Ovary (tissue), 10 donors: ENCODE measurements at regions of chr5 and their contacts with region 1.

Region 1: DNA sequence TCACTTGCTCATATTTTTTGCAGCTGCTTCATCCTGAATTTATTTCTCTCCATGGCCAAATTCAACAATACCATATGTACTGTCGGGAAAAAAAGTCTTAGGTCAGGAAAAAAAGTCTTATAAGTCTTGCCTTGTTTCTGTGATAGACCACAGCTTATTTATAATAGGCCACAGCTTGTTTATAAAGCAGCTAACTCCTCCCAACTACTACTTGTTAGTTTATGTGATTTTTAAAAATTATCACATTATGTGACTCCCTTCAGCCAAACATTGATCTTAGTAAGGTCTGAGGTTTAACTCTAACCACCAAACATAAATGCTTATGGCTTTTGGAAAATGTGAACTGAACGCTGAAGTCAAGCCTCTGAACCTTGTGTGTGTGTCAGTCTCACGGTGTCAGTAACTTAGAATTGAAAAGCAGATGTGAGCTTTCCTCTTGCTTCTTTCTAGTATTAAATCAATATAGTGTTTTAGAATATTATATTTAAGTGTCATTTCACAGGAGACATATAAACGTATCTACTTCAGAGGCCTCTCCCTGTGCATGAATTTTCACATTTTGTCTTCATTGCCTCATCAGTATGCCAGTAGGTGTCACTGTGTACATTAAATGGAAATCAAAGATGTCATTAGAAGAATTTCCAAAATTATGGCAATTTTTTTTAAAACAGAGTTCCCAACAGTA is 51.3 kb downstream of the SNX24 start:
- DNase-seq: no peak
- H3K4me3 ChIP-seq: no peak overlapping the region
- H3K27ac ChIP-seq: no peak overlapping the region
- H3K4me1 ChIP-seq: no peaks in the 10 kb centered on the region
- H3K27me3 ChIP-seq: no peaks in the 10 kb centered on the region
- CTCF ChIP-seq: peak in 1 of 3 donors; percentile 18
- EP300 ChIP-seq: no peak
- POLR2A ChIP-seq: no peak

Region 2: DNA sequence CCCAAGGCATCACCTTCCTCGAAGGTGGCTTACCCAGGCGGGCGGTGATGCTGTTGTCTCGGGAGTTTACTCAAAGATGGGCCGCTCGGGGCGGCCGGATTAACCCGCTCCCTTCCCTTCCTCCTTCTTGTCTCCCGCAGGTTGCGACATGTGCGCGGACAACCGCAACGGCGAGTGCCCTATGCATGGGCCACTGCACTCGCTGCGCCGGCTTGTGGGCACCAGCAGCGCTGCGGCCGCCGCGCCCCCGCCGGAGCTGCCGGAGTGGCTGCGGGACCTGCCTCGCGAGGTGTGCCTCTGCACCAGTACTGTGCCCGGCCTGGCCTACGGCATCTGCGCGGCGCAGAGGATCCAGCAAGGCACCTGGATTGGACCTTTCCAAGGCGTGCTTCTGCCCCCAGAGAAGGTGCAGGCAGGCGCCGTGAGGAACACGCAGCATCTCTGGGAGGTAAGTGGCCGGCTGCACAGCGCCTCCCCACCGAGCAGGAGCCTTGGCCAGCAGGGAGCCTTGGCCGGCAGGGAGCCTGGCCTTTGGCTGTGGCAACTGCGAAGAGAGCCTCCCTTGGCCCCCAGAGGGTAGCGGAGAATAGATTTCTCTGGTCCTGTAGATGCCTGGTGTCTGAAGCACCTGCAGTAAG is 202.9 kb after region 1 on chr5:
- intact Hi-C with region 1: no loop called
- DNase-seq: peak in 2 of 5 donors; percentile 33 to 35
- H3K4me3 ChIP-seq: no peak overlapping the region
- H3K27ac ChIP-seq: no peak overlapping the region
- H3K4me1 ChIP-seq: peaks cover 8% of the 10 kb centered on the region
- H3K27me3 ChIP-seq: no peaks in the 10 kb centered on the region
- CTCF ChIP-seq: no peak
- EP300 ChIP-seq: no peak
- POLR2A ChIP-seq: no peak

Region 3: GRCh38 chr5:123367739-123368138 is 471.0 kb after region 1 on chr5:
- intact Hi-C with region 1: loop called in 1 of 4 experiments (anchors 10 kb)
- DNase-seq: no peak
- H3K4me3 ChIP-seq: no peak overlapping the region
- H3K27ac ChIP-seq: no peak overlapping the region
- H3K4me1 ChIP-seq: peaks cover 1% of the 10 kb centered on the region
- H3K27me3 ChIP-seq: no peaks in the 10 kb centered on the region
- CTCF ChIP-seq: peak in 1 of 3 donors; percentile 31
- EP300 ChIP-seq: no peak
- POLR2A ChIP-seq: no peak

Region 4: GRCh38 chr5:123505633-123506032 is 608.9 kb after region 1 on chr5:
- intact Hi-C with region 1: no loop called
- DNase-seq: no peak
- H3K4me3 ChIP-seq: no peak overlapping the region
- H3K27ac ChIP-seq: no peak overlapping the region
- H3K4me1 ChIP-seq: no peaks in the 10 kb centered on the region
- H3K27me3 ChIP-seq: no peaks in the 10 kb centered on the region
- CTCF ChIP-seq: no peak
- EP300 ChIP-seq: no peak
- POLR2A ChIP-seq: no peak